CD8-positive, alpha-beta T cell (primary cell): ENCODE measurements at regions of chr2 and their contacts with region 1.

Region 1: DNA sequence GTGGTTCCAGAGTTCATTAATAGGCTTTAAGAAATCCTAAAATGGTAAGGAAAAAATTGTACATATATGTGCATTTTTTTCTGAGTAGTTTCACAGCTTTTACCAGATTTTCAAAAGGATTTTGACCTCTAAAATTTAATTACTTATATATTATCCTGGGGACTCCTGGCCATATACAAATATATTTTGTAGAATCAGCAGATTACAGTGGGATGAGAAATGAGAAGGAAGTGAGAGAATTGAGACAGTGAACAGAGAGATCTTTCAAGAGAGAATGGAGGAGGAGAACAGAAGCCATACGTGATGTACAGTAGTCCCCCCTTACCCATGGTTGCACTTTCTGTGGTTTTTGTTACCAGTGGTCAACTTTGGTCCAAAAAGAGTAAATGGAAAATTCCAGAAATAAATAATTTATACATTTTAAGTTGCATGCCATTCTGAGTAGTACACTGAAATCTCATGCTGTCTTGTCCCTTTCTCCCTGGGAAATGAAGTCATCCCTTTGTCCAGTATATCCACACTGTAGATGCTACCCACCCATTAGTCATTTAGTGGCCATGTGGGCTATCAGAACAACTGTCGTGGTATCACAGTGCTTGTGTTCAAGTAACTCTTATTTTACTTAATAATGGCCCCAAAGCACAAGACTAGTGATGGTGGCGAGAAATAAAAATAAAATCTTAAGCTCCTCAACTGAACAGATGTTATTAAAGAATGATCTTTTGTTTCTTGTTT is 130.4 kb upstream of the MYO3B start:
- DNase-seq: no peak
- ATAC-seq: no peak
- H3K4me3 ChIP-seq: no peak overlapping the region
- H3K4me3 Mint-ChIP-seq: no peak overlapping the region
- H3K27ac ChIP-seq: no peak overlapping the region
- H3K27ac Mint-ChIP-seq: no peak overlapping the region
- H3K4me1 ChIP-seq: no peaks in the 10 kb centered on the region
- H3K4me1 Mint-ChIP-seq: no peaks in the 10 kb centered on the region
- H3K27me3 ChIP-seq: no peaks in the 10 kb centered on the region
- H3K27me3 Mint-ChIP-seq: no peaks in the 10 kb centered on the region
- CTCF ChIP-seq: no peak

Region 2: DNA sequence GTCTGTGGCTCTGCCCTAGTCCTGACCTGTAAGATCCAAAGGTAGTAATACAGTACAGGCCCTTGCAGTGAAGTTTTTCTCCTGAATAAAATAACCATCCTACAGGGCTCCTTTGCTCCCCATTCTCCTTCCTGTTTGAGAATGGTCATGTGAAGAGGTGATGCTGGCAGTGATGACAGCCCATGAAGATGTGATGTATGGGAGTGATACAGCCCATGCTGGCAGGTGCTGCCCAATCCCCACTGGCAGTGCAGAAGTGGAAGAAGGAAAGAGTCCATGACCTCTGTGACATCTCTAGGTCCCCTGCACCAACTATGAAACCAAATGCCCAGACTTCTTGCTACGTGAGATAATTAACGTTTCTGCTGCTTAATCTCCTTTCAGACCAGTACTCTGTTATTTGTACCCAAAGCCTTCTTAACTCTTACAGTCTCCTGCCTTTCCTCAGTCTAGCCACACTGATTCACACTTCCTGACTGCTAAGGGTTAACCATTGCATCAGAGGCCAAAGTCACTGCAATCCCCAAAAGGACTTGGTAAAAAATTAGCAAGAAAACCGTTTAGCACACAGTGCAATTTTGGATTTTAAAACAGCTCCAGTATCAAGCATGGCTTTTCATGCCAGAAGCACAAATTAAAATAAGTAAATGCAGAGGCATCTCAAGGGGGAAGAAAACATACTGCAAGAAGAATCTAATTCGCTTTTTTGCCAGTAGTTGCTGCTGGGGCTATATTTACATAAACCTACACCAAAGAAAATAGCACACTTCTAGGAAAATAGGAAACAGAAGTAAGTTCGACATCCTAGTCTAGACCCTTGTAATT is 1898.1 kb before region 1 on chr2:
- CTCF ChIA-PET with region 1: no interaction called
- POLR2A ChIA-PET with region 1: no interaction called
- intact Hi-C with region 1: loop called in 1 of 2 experiments (anchors 5 kb)
- DNase-seq: no peak
- ATAC-seq: no peak
- H3K4me3 ChIP-seq: no peak overlapping the region
- H3K4me3 Mint-ChIP-seq: no peak overlapping the region
- H3K27ac ChIP-seq: no peak overlapping the region
- H3K27ac Mint-ChIP-seq: no peak overlapping the region
- H3K4me1 ChIP-seq: no peaks in the 10 kb centered on the region
- H3K4me1 Mint-ChIP-seq: peaks cover 7% of the 10 kb centered on the region
- H3K27me3 ChIP-seq: no peaks in the 10 kb centered on the region
- H3K27me3 Mint-ChIP-seq: no peaks in the 10 kb centered on the region
- CTCF ChIP-seq: no peak

Region 3: DNA sequence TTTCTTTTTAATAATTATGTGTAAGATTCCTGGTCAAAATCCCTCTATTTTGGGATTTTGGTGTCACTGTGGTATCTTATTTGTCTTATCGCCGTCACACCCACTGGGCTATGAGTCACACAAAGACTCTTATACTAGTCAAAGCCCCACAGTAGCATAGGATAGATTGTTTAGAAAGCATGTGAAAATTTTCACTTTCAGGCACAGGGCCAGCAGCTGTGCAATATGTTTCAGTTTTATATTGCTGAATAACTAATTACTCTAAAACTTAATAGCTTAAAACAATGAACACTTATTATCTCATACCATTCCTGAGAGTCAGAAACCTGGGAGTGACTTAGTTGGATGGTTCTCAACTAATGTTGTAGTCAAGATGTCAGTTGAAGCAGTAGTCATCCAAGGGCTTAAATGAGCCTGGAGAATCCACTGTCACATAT is 377.3 kb before region 1 on chr2:
- CTCF ChIA-PET with region 1: no interaction called
- POLR2A ChIA-PET with region 1: no interaction called
- intact Hi-C with region 1: no loop called
- DNase-seq: no peak
- ATAC-seq: no peak
- H3K4me3 ChIP-seq: no peak overlapping the region
- H3K4me3 Mint-ChIP-seq: no peak overlapping the region
- H3K27ac ChIP-seq: no peak overlapping the region
- H3K27ac Mint-ChIP-seq: no peak overlapping the region
- H3K4me1 ChIP-seq: no peaks in the 10 kb centered on the region
- H3K4me1 Mint-ChIP-seq: no peaks in the 10 kb centered on the region
- H3K27me3 ChIP-seq: no peaks in the 10 kb centered on the region
- H3K27me3 Mint-ChIP-seq: peaks cover 5% of the 10 kb centered on the region
- CTCF ChIP-seq: no peak

Region 4: DNA sequence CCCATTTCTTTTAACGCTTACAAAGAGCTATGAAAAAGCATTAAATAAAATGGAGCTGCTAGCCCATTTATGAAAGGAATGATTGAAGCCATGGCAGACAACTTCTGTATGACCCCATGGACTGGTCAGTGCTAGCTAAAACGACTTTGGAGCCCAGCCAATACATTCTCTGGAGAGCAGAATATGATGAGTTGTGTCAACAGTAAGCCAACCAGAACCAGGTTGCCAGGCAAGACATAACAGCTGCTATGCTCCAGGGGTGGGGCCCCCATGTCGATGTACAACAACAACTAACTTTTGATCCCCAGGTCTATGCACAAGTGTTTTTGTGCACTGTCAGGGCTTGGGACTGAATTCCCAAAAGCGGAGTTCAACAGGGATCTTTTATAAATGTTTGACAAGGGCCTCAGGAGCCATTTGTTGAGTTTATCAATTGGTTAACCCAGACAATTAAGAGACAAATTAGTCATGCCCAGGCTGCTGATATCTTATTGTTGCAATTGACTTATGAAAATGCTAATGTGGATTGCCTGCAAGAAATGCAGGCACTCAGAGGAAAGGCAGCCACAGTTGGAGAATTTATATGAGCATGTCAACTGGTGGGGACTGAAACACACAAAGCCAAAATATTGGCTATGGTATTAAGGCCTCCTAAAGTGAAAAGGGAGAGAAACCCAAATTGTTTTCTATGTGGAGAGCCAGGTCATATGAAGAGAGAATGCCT is 65.8 kb after region 1 on chr2:
- CTCF ChIA-PET with region 1: no interaction called
- POLR2A ChIA-PET with region 1: no interaction called
- intact Hi-C with region 1: no loop called
- DNase-seq: no peak
- ATAC-seq: no peak
- H3K4me3 ChIP-seq: no peak overlapping the region
- H3K4me3 Mint-ChIP-seq: no peak overlapping the region
- H3K27ac ChIP-seq: no peak overlapping the region
- H3K27ac Mint-ChIP-seq: no peak overlapping the region
- H3K4me1 ChIP-seq: no peaks in the 10 kb centered on the region
- H3K4me1 Mint-ChIP-seq: no peaks in the 10 kb centered on the region
- H3K27me3 ChIP-seq: no peaks in the 10 kb centered on the region
- H3K27me3 Mint-ChIP-seq: peaks cover 2% of the 10 kb centered on the region
- CTCF ChIP-seq: no peak

Region 5: GRCh38 chr2:170221317-170222288 is 174.1 kb after region 1 on chr2:
- CTCF ChIA-PET with region 1: no interaction called
- POLR2A ChIA-PET with region 1: no interaction called
- intact Hi-C with region 1: no loop called
- DNase-seq: no peak
- ATAC-seq: no peak
- H3K4me3 ChIP-seq: no peak overlapping the region
- H3K4me3 Mint-ChIP-seq: no peak overlapping the region
- H3K27ac ChIP-seq: no peak overlapping the region
- H3K27ac Mint-ChIP-seq: no peak overlapping the region
- H3K4me1 ChIP-seq: no peaks in the 10 kb centered on the region
- H3K4me1 Mint-ChIP-seq: peaks cover 4% of the 10 kb centered on the region
- H3K27me3 ChIP-seq: peaks cover 0 to 3% of the 10 kb centered on the region in 2 experiments
- H3K27me3 Mint-ChIP-seq: peaks cover 3% of the 10 kb centered on the region
- CTCF ChIP-seq: no peak